Thyroid gland (tissue), 4 donors: ENCODE measurements at regions of chr10 and their contacts with region 1.

Region 1: DNA sequence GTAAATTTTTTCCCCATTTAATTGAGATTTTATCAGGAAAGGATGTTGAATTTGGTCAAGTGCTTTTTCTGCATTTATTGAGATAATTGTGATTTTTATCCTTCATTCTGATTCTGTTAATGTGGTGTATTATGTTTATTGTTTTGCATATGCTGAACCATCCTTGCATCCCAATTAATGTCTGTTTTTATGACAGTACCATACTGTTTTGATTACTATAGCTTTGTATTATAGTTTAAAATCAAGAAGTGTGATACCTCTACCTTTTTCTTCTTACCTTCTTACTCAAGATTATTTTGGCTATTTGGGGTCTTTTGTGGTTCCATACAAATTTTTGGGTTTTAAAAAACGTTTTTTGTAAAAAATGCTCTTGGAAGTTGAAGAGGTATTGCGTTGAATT is 357.2 kb downstream of the REEP3 start:
- DNase-seq: no peak
- H3K4me3 ChIP-seq: no peak overlapping the region
- H3K27ac ChIP-seq: no peak overlapping the region
- H3K4me1 ChIP-seq: no peaks in the 10 kb centered on the region
- H3K27me3 ChIP-seq: no peaks in the 10 kb centered on the region
- CTCF ChIP-seq: no peak
- POLR2A ChIP-seq: no peak

Region 2: GRCh38 chr10:63583909-63584724 is 294.3 kb before region 1 on chr10:
- intact Hi-C with region 1: no loop called
- DNase-seq: no peak
- H3K4me3 ChIP-seq: no peak overlapping the region
- H3K27ac ChIP-seq: no peak overlapping the region
- H3K4me1 ChIP-seq: peaks cover 26% of the 10 kb centered on the region in 2 donors
- H3K27me3 ChIP-seq: no peaks in the 10 kb centered on the region
- CTCF ChIP-seq: no peak
- POLR2A ChIP-seq: no peak

Region 3: DNA sequence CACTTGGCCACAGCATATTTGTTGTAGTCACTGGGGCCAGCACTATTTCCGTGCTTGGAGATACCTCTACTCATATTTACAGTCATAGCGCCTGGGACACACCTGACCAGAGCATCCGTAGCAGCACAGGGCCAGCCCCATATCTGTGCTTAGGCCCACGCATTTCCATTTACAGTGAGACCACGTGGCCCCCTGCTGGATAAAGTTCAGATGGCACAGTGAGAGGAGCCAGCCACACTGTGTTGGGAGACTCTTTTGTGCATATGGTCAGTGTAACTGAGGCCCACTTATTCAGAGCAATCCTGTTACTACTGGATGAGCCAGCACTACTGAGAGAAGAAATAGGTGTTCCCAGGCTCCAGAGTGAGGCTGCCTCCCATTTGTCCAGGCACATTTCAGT is 98.1 kb after region 1 on chr10:
- intact Hi-C with region 1: loop called (anchors 10 kb)
- DNase-seq: peak; percentile 23 to 32
- H3K4me3 ChIP-seq: no peak overlapping the region
- H3K27ac ChIP-seq: peak overlapping the region in 1 of 3 donors; percentile 5
- H3K4me1 ChIP-seq: peaks cover 5 to 14% of the 10 kb centered on the region in 2 donors
- H3K27me3 ChIP-seq: no peaks in the 10 kb centered on the region
- CTCF ChIP-seq: peak in 5 of 6 experiments; percentile 16 to 48 (median 24)
- POLR2A ChIP-seq: no peak